ENCODE measurements at regions of chr17 and their contacts with region 1.

Region 1: GRCh38 chr17:73710095-73710592 is 65.9 kb upstream of the SDK2 start:
- DNase-seq: peak; percentile 71
- H3K4me3 Mint-ChIP-seq: no peak overlapping the region
- H3K27ac Mint-ChIP-seq: no peak overlapping the region
- H3K4me1 Mint-ChIP-seq: peaks cover 10% of the 10 kb centered on the region
- H3K27me3 Mint-ChIP-seq: no peaks in the 10 kb centered on the region

Region 2: DNA sequence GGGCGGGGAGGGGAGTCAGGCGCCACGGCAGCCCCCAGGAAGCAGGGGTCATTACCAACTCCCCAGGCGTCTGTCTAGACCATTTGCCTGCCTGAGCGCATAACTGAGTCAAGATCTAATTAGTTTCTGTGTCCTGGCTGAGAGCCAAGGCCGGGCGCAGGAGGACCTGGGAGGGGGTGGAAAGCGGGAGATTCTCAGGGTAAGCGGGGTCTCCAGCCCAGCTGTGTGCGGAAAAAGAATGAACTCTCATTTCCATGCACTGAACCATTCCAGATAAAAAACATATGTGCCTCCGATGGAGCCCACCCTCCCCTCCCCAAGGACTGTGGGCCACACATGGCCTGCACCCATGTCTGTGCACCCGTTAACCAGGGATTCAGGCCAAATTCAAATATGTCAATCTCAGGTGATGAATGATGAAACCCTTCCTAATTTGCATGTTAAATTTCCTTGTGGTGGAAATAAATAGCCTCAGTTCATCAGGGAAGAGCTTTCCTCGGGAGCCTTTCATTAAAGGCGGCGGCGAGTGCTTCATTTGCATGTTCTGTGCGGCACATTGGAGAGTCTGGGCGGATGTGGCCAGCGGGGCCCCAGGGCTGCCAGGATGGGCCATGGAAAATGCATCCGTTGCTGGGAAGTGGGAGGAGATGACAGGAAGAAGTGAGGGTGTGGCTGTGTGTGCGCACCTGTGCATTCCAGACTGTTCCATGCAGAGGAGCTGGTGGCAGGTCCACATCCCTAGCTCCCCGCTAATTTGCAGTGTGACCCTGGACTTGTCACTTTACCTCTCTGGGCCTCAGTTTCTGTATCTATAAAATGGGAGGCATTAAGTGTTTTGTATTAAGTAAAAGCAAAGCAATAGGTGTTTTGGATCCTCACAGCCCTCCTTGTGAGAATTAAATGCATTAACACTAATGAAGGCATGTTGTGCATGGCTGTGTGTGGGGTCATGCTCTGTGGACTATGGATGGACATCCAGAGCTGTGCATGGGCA is 217.0 kb before region 1 on chr17:
- CTCF ChIA-PET with region 1: no interaction called
- POLR2A ChIA-PET with region 1: no interaction called
- intact Hi-C with region 1: no loop called
- DNase-seq: no peak
- H3K4me3 Mint-ChIP-seq: no peak overlapping the region
- H3K27ac Mint-ChIP-seq: no peak overlapping the region
- H3K4me1 Mint-ChIP-seq: no peaks in the 10 kb centered on the region
- H3K27me3 Mint-ChIP-seq: peaks cover 3% of the 10 kb centered on the region

Region 3: DNA sequence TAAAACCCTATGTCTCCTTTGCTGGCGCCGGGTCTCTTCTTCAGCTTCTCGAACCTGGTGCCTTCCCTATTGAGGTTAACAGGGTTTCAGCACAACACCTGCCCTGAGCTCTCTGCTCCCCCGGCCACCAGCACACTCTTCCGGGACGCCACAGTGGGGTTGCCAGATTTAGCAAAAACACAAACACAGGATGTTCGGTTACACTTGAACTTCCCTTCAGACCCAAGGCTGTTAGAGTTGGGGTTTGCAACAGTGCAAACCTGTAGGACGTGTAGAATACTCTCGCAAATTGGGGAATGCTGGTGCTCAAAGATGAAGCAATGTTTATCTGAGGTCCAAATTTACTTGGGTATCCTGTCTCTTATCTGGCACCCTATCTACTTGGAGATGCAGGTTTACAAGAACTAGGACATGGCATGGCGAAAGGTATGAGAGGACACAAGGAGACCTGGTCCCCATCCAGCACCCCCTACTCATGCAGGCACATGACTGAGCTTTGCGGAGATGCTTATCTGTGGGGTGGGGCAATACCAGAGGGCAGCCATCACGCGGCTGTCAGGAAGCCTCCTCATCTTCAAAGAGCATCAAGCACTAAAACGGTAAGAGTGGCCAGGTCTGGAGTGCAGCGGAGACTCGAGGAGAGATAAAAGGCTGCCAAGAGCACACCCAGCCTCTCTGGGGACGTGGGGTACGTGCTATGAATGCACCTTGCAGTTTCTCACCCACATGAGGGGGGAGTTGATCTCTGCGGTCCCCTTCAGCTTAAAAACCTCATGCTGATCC is 118.7 kb before region 1 on chr17:
- CTCF ChIA-PET with region 1: no interaction called
- POLR2A ChIA-PET with region 1: no interaction called
- intact Hi-C with region 1: loop called (anchors 2 kb)
- DNase-seq: peak; percentile 45
- H3K4me3 Mint-ChIP-seq: peak overlapping the region; percentile 23
- H3K27ac Mint-ChIP-seq: peak overlapping the region; percentile 30
- H3K4me1 Mint-ChIP-seq: peaks cover 45% of the 10 kb centered on the region
- H3K27me3 Mint-ChIP-seq: no peaks in the 10 kb centered on the region

Region 4: DNA sequence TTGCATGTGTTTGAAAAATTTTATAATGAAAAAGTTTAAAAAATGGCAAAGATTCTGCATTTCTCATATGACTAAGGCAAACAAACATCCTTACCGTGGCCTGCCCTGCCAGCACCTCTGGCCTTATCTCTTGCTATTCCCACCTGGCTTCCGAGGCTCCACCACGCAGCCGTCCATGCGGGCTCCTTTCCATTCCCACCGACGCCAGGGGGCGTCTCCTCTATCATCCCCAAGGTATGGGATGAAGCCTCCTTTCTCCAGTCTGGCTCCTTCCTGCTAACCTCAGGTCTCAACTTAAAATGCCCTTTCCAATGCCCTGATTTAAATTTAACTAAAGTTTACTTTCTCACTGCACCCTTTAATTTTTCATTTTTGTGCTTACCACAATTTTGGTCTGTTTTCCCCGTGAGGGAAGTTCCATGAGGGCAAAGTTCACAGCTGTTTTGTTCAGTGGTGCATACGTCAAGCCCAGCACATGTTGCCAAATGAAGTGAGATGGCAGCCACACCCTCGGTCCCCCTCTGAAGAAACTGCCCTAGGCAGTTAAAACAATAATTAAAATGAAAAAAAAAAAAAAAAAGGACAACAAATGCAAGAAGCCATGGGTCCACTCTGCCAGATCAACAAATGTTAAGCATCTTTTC is 52.5 kb before region 1 on chr17:
- CTCF ChIA-PET with region 1: interaction called, 3 read pairs
- POLR2A ChIA-PET with region 1: no interaction called
- intact Hi-C with region 1: loop called (anchors 2 kb)
- DNase-seq: peak; percentile 47
- H3K4me3 Mint-ChIP-seq: no peak overlapping the region
- H3K27ac Mint-ChIP-seq: no peak overlapping the region
- H3K4me1 Mint-ChIP-seq: no peaks in the 10 kb centered on the region
- H3K27me3 Mint-ChIP-seq: no peaks in the 10 kb centered on the region

Measured in activated CD4-positive, alpha-beta memory T cell treated with anti-CD3 and anti-CD28 coated beads for 36 hours (primary cell).